HEK293 (cell line): ENCODE measurements at regions of chr11 and their contacts with region 1.

Region 1: DNA sequence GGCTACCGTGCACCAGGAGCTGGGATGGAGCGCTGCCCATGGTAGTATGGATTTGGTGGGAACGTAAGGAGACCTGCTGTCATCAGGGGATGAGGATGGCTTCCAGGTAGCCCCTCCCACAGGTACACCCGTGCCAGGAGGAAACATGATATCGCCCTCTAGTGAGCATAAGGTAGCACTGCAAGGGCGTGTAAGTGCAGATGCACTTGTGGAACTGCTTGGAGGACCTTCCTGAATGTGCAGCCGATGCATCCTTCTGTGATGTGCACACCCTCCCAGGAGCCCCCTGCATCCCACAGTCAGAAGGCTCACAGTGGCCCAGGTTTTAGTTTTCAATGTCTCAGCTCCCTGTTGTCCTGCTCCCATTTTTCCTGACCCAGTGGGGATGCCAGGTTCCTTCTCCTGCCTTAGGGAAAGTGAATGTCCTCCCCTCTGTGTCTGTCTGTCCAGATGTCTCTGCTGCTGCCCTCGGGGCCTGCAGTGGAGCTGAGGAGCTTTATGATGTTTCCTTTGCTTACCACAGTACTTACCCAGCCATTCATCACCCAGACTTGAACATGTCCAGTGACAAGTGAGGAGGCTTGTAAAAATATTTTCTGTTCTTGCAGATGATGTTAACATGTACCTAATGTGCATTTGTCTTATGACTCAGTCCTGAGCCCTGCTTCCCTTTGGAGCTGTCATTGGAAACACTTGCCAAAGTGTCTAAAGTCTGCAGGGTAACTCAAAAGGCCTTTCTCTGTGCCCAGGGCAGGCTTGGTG is 49.2 kb downstream of the DBX1 start:
- H3K4me3 ChIP-seq: no peak overlapping the region
- H3K27ac ChIP-seq: no peak overlapping the region
- H3K4me1 ChIP-seq: peaks cover 3% of the 10 kb centered on the region; the same call in 1 of the 2 replicates
- CTCF ChIP-seq: peak; percentile 75

Region 2: GRCh38 chr11:19820100-19820499 is 291.0 kb before region 1 on chr11:
- CTCF ChIA-PET with region 1: no interaction called
- POLR2A ChIA-PET with region 1: no interaction called
- H3K4me3 ChIP-seq: no peak overlapping the region
- H3K27ac ChIP-seq: no peak overlapping the region
- H3K4me1 ChIP-seq: no peaks in the 10 kb centered on the region; the same call in 1 of the 2 replicates
- CTCF ChIP-seq: no peak

Region 3: GRCh38 chr11:19938169-19938856 is 172.8 kb before region 1 on chr11:
- CTCF ChIA-PET with region 1: interaction called, 10 read pairs
- POLR2A ChIA-PET with region 1: no interaction called
- H3K4me3 ChIP-seq: no peak overlapping the region
- H3K27ac ChIP-seq: no peak overlapping the region
- H3K4me1 ChIP-seq: no peaks in the 10 kb centered on the region
- CTCF ChIP-seq: no peak

Region 4: GRCh38 chr11:19951558-19952115 is 159.5 kb before region 1 on chr11:
- CTCF ChIA-PET with region 1: interaction called, 68 read pairs
- POLR2A ChIA-PET with region 1: no interaction called
- H3K4me3 ChIP-seq: no peak overlapping the region
- H3K27ac ChIP-seq: peak overlapping the region; percentile 48
- H3K4me1 ChIP-seq: peaks cover 12% of the 10 kb centered on the region
- CTCF ChIP-seq: no peak

Region 5: GRCh38 chr11:20022363-20023081 is 88.6 kb before region 1 on chr11:
- CTCF ChIA-PET with region 1: interaction called, 10 read pairs
- POLR2A ChIA-PET with region 1: interaction called, 4 read pairs
- H3K4me3 ChIP-seq: peak overlapping the region; percentile 35
- H3K27ac ChIP-seq: peak overlapping the region; percentile 60
- H3K4me1 ChIP-seq: peaks cover 17% of the 10 kb centered on the region
- CTCF ChIP-seq: no peak

Region 6: GRCh38 chr11:20097319-20098221 is 13.5 kb before region 1 on chr11:
- CTCF ChIA-PET with region 1: interaction called, 11 read pairs
- POLR2A ChIA-PET with region 1: no interaction called
- H3K4me3 ChIP-seq: no peak overlapping the region
- H3K27ac ChIP-seq: no peak overlapping the region; the same call in 1 of the 2 replicates
- H3K4me1 ChIP-seq: peaks cover 9% of the 10 kb centered on the region
- CTCF ChIP-seq: no peak

Region 7: DNA sequence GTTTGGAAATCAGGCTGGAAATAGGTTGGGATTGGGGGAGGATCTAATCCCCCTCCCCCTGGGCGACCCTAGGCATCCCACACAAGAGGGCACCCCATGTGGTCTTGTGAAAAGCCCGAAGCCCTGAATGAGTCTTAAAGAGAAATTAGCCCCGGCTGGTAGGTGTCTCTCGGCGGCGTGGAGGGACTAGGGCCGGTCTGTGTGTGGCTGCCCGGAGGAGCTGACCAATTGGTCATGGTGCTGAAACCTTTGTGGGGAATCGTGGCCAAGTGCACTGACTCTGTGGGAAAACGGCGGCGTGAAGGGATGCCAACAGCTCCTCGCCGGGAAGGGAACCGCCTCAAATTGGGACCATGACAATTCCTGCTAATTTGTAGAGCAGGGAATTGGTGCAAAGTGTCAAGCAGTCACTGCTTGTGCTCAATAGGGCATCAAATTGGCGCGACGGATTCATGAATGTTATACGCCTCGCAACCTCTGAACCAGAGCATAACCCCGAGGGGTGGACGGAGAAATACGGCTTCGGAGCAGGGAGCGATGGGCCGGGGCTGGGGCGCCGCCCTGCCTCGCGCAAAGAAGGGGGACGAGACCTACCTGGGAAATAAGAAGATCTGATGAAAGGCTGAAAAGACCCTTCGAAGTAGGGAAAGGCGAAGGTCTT is 47.6 kb after region 1 on chr11:
- CTCF ChIA-PET with region 1: no interaction called
- POLR2A ChIA-PET with region 1: no interaction called
- H3K4me3 ChIP-seq: no peak overlapping the region
- H3K27ac ChIP-seq: no peak overlapping the region
- H3K4me1 ChIP-seq: no peaks in the 10 kb centered on the region; the same call in 1 of the 2 replicates
- CTCF ChIP-seq: no peak

Region 8: DNA sequence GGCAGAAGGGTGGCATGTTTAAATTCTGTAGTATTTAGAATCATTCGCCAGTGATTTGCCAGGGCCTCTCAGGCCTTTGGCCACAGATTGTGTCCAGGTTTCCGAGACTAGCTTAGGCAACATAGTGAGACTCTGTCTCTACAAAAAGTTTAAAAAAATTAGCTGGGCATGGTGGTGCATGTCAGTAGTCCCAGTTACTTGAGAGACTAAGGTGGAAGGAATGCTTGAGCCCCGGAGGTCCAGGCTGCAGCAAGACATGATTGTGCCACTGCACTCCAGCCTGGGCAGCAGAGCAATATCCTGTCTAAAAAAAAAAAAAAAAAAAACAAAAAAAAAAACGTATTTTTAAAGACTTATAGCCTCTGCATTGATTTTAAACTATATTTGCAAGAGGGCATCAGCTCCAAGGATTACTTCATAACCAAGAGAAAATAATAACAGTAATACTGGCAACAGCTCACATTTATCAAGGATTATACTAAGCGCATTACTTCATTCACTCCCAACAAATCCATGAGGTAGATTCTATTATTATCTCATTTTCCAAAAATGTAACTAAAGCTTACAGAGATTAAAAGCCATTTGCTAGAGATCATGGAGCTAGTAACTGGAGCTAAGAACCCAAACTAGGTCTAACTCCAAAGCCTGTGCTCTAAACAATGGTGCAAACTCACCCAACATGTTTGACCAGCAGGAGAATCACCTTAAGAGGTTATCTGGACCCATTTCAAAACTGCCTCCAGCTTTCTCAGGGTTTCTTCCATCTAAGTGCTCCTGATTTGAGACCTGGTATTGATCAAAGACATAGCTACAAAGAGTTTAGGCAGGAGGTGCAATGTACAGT is 455.7 kb after region 1 on chr11:
- CTCF ChIA-PET with region 1: no interaction called
- POLR2A ChIA-PET with region 1: no interaction called
- H3K4me3 ChIP-seq: no peak overlapping the region
- H3K27ac ChIP-seq: no peak overlapping the region
- H3K4me1 ChIP-seq: no peaks in the 10 kb centered on the region
- CTCF ChIP-seq: no peak